ENCODE measurements at regions of chr12 and their contacts with region 1.

Region 1: GRCh38 chr12:53065975-53066931 is 12.9 kb downstream of the SPRYD3 start:
- DNase-seq: peak; percentile 67 to 74
- ATAC-seq: peak; percentile 65 to 69
- H3K4me3 ChIP-seq: no peak overlapping the region
- H3K27ac ChIP-seq: peak overlapping the region; percentile 71 to 74 (median 74)
- H3K4me1 ChIP-seq: peaks cover 34 to 37% of the 10 kb centered on the region in 2 donors
- H3K27me3 ChIP-seq: no peaks in the 10 kb centered on the region
- CTCF ChIP-seq: peak; percentile 89 to 95 (median 94)
- POLR2A ChIP-seq: no peak

Region 2: GRCh38 chr12:53039851-53040250 is 26.4 kb before region 1 on chr12:
- in situ Hi-C with region 1: no loop called
- intact Hi-C with region 1: loop called (anchors 2 kb)
- DNase-seq: peak in 1 of 2 donors; percentile 15
- ATAC-seq: peak; percentile 21 to 26
- H3K4me3 ChIP-seq: no peak overlapping the region
- H3K27ac ChIP-seq: peak overlapping the region; percentile 66 to 84 (median 72)
- H3K4me1 ChIP-seq: peaks cover 5 to 24% of the 10 kb centered on the region in 2 donors
- H3K27me3 ChIP-seq: no peaks in the 10 kb centered on the region
- CTCF ChIP-seq: no peak
- POLR2A ChIP-seq: no peak

Region 3: GRCh38 chr12:53079226-53080117 is 13.2 kb after region 1 on chr12 and contains the start of gene SPRYD3:
- in situ Hi-C with region 1: no loop called
- intact Hi-C with region 1: loop called (anchors 2 kb)
- DNase-seq: peak; percentile 97 to 98
- ATAC-seq: peak; percentile 97
- H3K4me3 ChIP-seq: peak within 1 kb of the TSS; percentile 70 to 84 (median 77)
- H3K27ac ChIP-seq: peak within 1 kb of the TSS; percentile 86 to 93 (median 88)
- H3K4me1 ChIP-seq: peaks cover 9 to 17% of the 10 kb centered on the region in 2 donors
- H3K27me3 ChIP-seq: no peaks in the 10 kb centered on the region
- CTCF ChIP-seq: no peak
- POLR2A ChIP-seq: peak; percentile 74 to 78
- total RNA-seq, gene SPRYD3: 15.9 to 29.5 (median 25.5) TPM

Region 4: DNA sequence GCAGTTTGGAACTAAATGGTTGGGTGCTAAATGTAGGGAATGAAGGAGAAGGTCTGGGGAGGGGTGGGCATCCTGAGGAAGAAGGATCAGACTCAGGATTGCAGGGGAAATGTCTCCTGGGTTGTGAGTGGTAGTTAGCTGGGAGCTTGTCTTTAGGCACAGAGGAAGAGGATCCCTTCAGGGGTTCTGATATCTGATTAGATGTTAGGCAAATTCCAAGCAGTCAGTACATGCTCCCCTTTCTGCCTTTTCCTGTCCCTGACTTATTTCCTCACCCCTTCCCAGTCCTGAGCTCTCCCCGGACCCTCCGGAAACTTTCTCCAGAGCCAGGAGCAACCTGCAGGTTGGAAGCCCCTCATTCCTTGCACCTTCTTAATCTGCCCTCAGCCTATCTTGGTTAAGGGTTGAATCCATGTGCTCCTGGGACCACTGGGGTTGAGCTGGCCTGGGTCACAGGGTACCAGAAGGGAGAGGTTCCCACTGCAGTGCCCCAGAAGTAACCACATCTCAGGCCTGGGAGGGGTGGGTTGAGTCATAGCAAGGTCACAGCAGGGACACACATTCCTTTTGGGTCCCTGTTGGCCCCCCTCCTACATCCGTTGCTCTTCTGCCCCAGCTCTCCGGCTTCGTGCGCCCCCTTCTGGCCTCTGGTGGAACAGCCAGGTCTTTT is 32.9 kb after region 1 on chr12:
- in situ Hi-C with region 1: loop called in 2 of 4 experiments (anchors 5 kb)
- intact Hi-C with region 1: loop called (anchors 1 kb)
- DNase-seq: peak; percentile 68 to 87
- ATAC-seq: peak; percentile 74 to 76
- H3K4me3 ChIP-seq: peak overlapping the region; percentile 0 to 71 (median 47)
- H3K27ac ChIP-seq: peak overlapping the region; percentile 69 to 81 (median 79)
- H3K4me1 ChIP-seq: peaks cover 12 to 21% of the 10 kb centered on the region in 2 donors
- H3K27me3 ChIP-seq: no peaks in the 10 kb centered on the region
- CTCF ChIP-seq: peak; percentile 90 to 99 (median 93)
- POLR2A ChIP-seq: no peak

Region 5: GRCh38 chr12:53180220-53180930 is 114.1 kb after region 1 on chr12 and contains the starts of genes CSAD and ZNF740:
- in situ Hi-C with region 1: loop called in 2 of 4 experiments (anchors 10 to 25 kb)
- intact Hi-C with region 1: loop called (anchors 5 kb)
- DNase-seq: peak; percentile 98
- ATAC-seq: peak; percentile 92 to 95
- H3K4me3 ChIP-seq: peak within 1 kb of the TSS; percentile 63 to 95 (median 69)
- H3K27ac ChIP-seq: peak within 1 kb of the TSS; percentile 85 to 97 (median 91)
- H3K4me1 ChIP-seq: peaks cover 37% of the 10 kb centered on the region in 2 donors
- H3K27me3 ChIP-seq: no peaks in the 10 kb centered on the region
- CTCF ChIP-seq: no peak
- POLR2A ChIP-seq: peak; percentile 71 to 79
- total RNA-seq, gene CSAD: 0.68 to 14.9 (median 1.9) TPM
- total RNA-seq, gene ZNF740: 4.1 to 7.4 (median 5.0) TPM

Region 6: DNA sequence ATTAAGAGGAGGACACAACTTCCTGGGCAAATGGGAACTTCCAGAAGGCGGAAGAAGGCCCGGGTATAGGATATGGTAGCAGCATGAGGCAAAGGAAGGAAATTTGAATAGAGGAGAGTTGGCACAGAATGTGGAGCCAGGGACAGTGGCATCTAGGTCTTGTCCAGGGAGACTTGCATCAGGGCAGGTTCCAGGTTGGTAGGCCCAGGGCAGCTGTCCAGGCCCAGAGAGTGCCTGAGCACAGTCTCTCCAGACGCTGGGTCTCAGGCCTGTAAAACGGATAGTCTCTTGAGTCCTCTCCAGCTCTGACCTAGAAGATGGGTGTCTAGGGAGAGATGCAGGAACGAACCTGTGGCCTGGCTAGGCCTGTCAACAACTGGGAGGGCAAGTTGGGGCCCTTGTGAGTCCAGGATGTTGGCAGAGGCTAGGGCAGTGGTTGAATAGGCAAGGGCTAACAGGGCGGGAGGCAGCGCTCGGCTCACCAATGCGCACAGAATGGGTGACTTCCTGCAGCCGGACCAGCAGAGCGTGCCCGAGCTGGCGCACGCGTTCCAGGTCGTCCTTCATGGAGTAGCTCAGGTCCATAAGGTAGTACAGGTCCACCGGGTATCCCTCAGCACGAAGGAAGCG is 130.9 kb after region 1 on chr12:
- in situ Hi-C with region 1: loop called in 1 of 4 experiments (anchors 25 kb)
- intact Hi-C with region 1: loop called (anchors 1 kb)
- DNase-seq: no peak
- ATAC-seq: peak in 1 of 2 donors; percentile 22
- H3K4me3 ChIP-seq: peak overlapping the region; percentile 24 to 38 (median 29)
- H3K27ac ChIP-seq: no peak overlapping the region
- H3K4me1 ChIP-seq: peaks cover 0 to 9% of the 10 kb centered on the region in 2 donors
- H3K27me3 ChIP-seq: peaks cover 0 to 5% (median 3%) of the 10 kb centered on the region in 3 donors
- CTCF ChIP-seq: no peak
- POLR2A ChIP-seq: no peak

Region 7: GRCh38 chr12:53701518-53702260 is 635.4 kb after region 1 on chr12:
- in situ Hi-C with region 1: no loop called
- intact Hi-C with region 1: no loop called
- DNase-seq: peak; percentile 53 to 70
- ATAC-seq: peak; percentile 86 to 87
- H3K4me3 ChIP-seq: no peak overlapping the region
- H3K27ac ChIP-seq: no peak overlapping the region
- H3K4me1 ChIP-seq: no peaks in the 10 kb centered on the region
- H3K27me3 ChIP-seq: peaks cover 20 to 32% (median 21%) of the 10 kb centered on the region in 3 donors
- CTCF ChIP-seq: peak; percentile 78 to 92 (median 91)
- POLR2A ChIP-seq: no peak

Region 8: DNA sequence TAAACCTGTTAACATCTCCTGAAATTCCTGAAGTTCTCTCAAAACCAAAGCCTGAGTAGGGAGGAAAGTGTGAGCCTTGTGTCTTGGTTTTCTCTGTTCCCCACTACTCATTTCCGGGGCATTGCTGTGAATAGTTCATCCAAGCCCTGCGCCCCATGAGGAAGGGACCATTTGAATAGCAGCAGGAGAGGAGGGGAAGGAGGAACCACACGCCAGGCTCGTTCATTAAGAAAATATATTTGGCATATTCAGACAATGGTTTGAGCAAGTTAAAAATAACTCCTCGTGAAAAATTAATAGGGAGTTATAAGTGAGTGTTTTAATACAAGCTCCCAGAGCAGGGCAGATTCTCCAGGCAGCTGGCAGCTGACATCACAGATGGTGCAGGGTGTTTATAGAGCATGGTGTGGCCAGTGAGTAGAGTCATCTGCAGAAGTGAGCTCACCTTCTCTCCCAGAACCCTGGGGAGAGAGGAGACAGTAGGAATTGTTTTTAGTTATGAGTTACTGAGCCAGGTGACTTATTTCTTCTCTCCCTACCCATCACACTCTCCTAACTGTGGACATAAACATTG is 715.1 kb after region 1 on chr12:
- in situ Hi-C with region 1: no loop called
- intact Hi-C with region 1: no loop called
- DNase-seq: no peak
- ATAC-seq: no peak
- H3K4me3 ChIP-seq: no peak overlapping the region
- H3K27ac ChIP-seq: no peak overlapping the region
- H3K4me1 ChIP-seq: peaks cover 0 to under 1% of the 10 kb centered on the region in 2 donors
- H3K27me3 ChIP-seq: peaks cover 2 to 21% (median 3%) of the 10 kb centered on the region in 3 donors
- CTCF ChIP-seq: no peak
- POLR2A ChIP-seq: no peak